Dorsolateral prefrontal cortex (tissue), 120 donors: ENCODE measurements at regions of chr17 and their contacts with region 1.

Region 1: DNA sequence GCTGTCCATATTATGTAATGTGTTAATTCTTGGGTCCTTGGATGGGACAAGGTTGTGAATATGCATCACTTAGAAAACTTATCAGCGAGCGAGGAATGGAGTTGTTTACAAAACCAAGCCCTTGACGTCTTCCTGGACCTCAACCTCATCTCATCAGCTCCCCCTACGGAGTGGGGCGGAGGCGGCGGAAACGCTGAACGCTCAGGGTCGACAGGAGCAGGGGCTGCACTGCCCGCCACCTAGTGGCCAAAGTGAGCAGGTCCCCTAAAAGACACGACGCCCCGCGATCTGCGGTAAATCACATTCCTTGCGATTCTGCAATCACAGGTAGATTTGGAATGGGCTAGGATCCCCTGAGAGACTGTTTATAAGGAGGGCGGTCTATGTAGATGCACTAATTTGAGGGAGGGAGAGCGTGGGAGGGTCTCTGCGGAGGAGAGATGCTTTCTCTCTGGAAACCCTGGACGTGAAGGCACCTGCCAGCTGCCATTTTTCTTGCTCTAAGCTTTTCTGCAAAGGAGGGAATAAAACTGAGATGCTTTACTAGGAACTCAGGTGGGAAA is 5.4 kb upstream of the ICAM2 start:
- DNase-seq: peak in 3 of 10 donors; percentile 33 to 48 (median 40)
- H3K4me3 ChIP-seq: peak overlapping the region in 21 of 59 donors; percentile 5 to 45 (median 26)
- H3K27ac ChIP-seq: peak overlapping the region in 1 of 59 donors; percentile 44
- H3K27me3 ChIP-seq: peaks cover 0 to 6% (median 0%) of the 10 kb centered on the region in 45 donors
- CTCF ChIP-seq: peak; percentile 61 to 94 (median 80)

Region 2: DNA sequence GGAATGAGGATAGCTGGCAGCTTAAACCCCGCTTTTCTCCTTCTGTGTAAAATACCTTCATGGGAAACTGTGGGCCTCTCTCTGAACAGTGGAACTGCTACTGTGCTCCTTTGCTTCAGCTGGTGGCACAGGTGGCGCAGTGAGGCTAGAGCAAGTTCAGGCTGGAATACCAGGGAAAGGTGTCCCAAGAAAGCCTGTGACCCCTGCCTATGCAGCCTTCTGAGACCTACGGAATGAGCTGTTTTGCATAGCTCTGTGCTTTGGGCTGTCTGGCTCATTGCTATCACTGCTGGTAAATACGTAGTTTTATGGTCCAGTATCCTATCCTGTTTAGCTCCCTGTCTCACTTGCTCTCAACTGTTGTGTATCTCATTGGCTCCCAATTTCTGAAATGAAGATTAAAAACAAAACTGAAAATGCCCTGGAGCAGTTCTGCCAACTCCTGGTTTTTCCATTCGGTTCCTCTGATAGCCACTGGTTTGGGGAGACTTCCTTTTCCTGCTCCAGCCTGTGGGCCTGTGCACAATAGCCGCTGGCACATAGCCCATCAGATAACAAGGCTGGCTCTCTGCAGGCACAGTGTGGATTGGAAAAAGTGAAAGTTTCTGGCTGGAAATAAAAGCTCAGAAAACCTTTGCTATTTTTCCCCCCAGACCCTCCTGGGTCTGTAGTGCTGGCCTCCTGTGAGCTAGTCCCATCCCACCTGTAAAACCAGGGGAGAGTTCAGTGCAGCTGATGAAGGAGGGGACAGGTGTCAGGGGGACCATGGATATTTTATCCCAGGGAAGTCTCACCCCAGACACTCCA is 350.0 kb before region 1 on chr17:
- intact Hi-C with region 1: no loop called
- DNase-seq: peak in 2 of 10 donors; percentile 48 to 65
- H3K4me3 ChIP-seq: peak overlapping the region in 15 of 59 donors; percentile 0 to 32 (median 5)
- H3K27ac ChIP-seq: peak overlapping the region in 49 of 59 donors; percentile 6 to 82 (median 61)
- H3K27me3 ChIP-seq: no peaks in the 10 kb centered on the region
- CTCF ChIP-seq: no peak

Region 3: DNA sequence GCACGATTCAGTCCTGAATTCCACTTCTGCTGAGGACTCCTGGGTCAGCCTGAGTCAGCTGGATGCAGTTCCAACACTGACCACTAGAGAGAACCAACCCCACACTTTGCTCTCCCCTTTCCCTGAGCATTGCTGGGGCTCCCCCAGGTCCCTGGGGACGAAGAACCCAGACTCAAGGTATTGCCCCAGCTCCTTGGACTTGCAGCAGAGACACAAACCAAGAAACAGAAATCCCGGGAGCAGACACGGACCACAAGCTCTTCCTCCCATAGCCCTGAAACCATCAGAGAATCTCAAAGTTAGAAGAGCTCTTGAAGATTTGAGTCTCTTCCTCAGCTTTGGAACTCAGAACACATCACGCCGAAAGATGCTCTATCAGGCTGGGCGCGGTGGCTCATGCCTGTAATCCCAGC is 106.5 kb before region 1 on chr17:
- intact Hi-C with region 1: loop called in 1 of 2 experiments (anchors 10 kb)
- DNase-seq: peak in 4 of 10 donors; percentile 32 to 57 (median 42)
- H3K4me3 ChIP-seq: no peak overlapping the region
- H3K27ac ChIP-seq: no peak overlapping the region
- H3K27me3 ChIP-seq: no peaks in the 10 kb centered on the region
- CTCF ChIP-seq: peak; percentile 70 to 95 (median 87)